Endothelial cell of umbilical vein (primary cell): ENCODE measurements at regions of chr3 and their contacts with region 1.

Region 1: DNA sequence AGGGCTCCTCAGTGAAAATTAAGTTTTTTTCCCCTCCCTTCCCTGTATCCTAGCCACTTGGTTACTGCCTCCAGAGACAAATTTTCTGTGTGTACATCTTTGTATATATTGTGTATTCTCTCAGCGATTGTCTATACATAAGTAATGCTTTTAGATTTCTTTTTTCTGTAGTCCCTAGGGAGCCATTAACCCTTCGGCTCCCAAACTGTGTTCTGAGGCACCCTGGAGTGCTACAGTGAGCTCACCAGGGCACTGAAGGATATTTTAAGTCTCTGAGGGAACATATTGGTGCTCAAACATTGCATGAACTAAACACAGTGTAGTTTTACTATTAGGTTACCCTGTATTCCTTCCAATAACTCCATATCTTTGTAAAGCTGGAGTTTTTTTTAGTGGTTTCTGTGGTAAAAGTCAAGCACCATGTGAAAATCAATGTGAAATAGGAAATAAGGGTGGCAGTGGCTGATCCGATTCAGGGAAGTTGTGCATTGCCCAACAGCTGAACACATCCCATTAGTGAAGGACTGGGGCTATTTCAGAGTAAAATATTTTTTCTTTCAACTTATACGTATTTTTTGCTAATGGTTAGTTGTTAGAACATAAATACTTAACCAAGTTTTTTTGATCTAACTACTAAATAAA is 43.0 kb downstream of the USP13 start:
- DNase-seq: no peak
- H3K4me3 ChIP-seq: no peak overlapping the region
- H3K27ac ChIP-seq: no peak overlapping the region
- H3K4me1 ChIP-seq: no peaks in the 10 kb centered on the region
- H3K27me3 ChIP-seq: no peaks in the 10 kb centered on the region
- CTCF ChIP-seq: no peak
- POLR2A ChIP-seq: no peak

Region 2: GRCh38 chr3:179681492-179682249 is 14.1 kb before region 1 on chr3:
- CTCF ChIA-PET with region 1: interaction called, 3 read pairs
- POLR2A ChIA-PET with region 1: no interaction called
- dilution Hi-C with region 1: no loop called
- intact Hi-C with region 1: loop called (anchors 2 kb)
- DNase-seq: peak; percentile 16
- H3K4me3 ChIP-seq: no peak overlapping the region
- H3K27ac ChIP-seq: no peak overlapping the region
- H3K4me1 ChIP-seq: peaks cover 15% of the 10 kb centered on the region
- H3K27me3 ChIP-seq: no peaks in the 10 kb centered on the region
- CTCF ChIP-seq: no peak
- POLR2A ChIP-seq: no peak

Region 3: DNA sequence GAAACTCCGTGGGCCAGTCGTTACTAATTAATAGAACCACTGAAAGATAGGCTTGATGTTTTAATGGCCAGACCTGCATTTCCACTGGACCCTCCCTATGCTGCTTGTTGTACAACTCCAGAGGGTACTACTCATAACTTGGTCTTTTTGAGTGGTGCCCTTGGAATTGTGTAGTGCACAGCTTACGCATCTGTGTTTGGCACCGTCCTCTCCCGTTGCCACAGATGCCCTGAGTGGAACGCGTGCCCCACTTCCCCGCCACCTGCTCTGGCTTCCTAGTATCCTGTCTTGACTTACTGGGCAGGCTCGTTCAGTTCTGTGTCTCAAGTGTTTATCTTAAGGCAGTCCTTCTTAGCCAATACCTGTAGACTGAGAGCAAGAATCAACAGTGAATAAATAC is 35.8 kb after region 1 on chr3:
- CTCF ChIA-PET with region 1: no interaction called
- POLR2A ChIA-PET with region 1: no interaction called
- dilution Hi-C with region 1: no loop called
- intact Hi-C with region 1: no loop called
- DNase-seq: no peak
- H3K4me3 ChIP-seq: no peak overlapping the region
- H3K27ac ChIP-seq: no peak overlapping the region
- H3K4me1 ChIP-seq: no peaks in the 10 kb centered on the region
- H3K27me3 ChIP-seq: no peaks in the 10 kb centered on the region
- CTCF ChIP-seq: no peak
- POLR2A ChIP-seq: no peak